ENCODE measurements at regions of chr6 and their contacts with region 1.

Region 1: DNA sequence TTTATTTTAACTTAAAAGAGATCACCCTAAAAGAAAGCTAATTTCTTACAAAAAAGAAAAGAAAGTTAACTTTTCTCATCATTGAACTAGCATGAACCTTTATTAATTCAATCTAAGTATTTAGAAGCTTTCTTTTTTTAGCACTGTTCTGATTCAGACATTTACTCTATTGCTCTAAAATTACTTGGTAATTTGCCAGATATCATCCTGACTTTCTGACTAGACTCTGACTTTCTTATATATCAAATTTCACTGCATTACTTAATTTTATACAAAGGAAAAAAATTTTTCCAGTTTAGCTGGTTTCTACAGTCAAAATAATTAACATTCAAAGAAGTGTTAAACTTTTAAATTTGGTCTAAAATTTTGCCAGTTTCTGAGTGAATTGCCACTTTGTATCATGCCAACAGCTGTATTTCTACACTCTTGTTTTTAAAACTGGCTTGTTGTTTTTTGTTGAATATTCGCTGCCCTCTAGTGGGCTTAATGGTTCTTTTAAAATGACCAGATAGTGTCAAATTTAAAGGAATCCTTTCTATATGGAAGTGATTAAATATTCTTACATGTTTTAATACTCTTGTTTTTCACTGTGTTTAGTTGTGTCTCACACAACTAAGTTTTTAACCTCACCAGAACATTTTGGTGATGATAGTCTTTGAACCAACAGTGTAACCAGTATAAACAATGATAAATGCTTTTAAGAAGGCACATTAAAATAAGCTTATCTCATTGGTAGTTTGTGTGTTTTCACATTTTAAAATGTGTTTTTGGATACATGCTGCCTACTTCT is 102.0 kb downstream of the POPDC3 start:
- DNase-seq: no peak
- H3K4me3 Mint-ChIP-seq: no peak overlapping the region
- H3K27ac Mint-ChIP-seq: no peak overlapping the region
- H3K4me1 Mint-ChIP-seq: no peaks in the 10 kb centered on the region
- H3K27me3 Mint-ChIP-seq: peaks cover 9% of the 10 kb centered on the region

Region 2: DNA sequence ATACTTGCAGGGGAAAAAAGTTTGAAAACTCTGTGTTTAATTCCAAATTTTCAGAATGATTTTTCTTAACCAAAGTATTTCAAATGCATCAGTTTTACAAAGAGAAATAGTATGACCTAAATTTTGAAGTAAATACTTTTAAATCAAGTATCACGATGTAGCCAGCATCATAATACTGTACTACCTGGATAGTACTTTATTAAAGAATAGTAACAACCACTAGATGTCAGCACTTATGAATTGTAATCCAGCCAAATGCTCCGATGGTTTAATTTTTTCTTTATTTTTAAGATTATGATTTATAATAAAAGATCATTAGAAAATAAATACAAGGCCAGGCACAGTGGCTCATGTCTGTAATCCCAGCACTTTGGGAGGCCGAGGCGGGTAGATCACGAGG is 180.9 kb before region 1 on chr6:
- CTCF ChIA-PET with region 1: interaction called, 3 read pairs
- intact Hi-C with region 1: loop called (anchors 1 kb)
- DNase-seq: no peak
- H3K4me3 Mint-ChIP-seq: no peak overlapping the region
- H3K27ac Mint-ChIP-seq: no peak overlapping the region
- H3K4me1 Mint-ChIP-seq: no peaks in the 10 kb centered on the region
- H3K27me3 Mint-ChIP-seq: peaks cover 13% of the 10 kb centered on the region

Region 3: DNA sequence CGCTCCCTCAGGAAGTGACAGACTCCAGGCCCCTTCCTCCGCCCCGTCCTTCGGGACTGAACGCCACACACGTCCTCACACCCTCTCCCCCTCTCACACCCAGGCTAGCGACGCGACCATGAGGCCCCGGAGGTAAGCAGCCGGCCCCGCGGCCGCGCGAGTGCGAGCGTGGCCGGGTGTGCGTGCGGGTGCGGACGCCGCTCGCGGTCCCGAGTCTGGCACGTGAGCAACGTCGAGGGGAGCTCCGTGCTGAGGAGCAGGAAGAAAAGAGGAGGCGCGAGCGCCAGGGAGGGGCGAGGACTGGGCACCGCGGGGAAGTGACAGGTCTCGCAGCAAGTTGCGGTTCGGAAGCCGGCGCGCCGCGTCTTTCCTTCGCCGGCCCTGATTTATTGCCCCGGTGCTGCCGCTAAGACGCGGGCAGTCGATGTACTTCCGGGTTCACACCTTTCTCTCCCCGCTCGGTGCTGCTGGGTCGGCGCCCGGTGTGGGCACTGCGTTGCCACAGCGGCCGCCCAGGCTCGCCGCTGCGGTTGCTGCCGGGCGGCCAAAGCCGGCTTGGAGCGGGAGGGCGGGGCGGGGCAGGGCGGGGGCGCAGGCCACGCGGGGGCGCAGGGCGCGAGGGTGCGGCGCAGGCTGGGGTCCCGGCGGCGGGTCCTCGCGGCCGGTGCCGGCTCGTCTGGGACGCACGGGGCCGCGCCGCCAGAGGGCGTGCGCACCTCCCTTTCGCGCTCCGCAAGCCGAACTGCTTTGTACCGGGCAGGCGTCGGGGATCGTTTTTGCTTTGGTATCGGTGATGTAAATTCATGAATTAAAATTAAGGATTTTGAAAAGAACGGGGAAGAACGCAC is 136.7 kb before region 1 on chr6:
- CTCF ChIA-PET with region 1: interaction called, 5 read pairs
- intact Hi-C with region 1: loop called (anchors 1 kb)
- DNase-seq: peak; percentile 45
- H3K4me3 Mint-ChIP-seq: peak overlapping the region; percentile 65
- H3K27ac Mint-ChIP-seq: no peak overlapping the region
- H3K4me1 Mint-ChIP-seq: peaks cover 5% of the 10 kb centered on the region
- H3K27me3 Mint-ChIP-seq: peaks cover 43% of the 10 kb centered on the region

Measured in activated naive CD4-positive, alpha-beta T cell treated with anti-CD3 and anti-CD28 coated beads for 36 hours (primary cell).